Stomach (tissue), 19 donors: ENCODE measurements at regions of chr19 and their contacts with region 1.

Region 1: DNA sequence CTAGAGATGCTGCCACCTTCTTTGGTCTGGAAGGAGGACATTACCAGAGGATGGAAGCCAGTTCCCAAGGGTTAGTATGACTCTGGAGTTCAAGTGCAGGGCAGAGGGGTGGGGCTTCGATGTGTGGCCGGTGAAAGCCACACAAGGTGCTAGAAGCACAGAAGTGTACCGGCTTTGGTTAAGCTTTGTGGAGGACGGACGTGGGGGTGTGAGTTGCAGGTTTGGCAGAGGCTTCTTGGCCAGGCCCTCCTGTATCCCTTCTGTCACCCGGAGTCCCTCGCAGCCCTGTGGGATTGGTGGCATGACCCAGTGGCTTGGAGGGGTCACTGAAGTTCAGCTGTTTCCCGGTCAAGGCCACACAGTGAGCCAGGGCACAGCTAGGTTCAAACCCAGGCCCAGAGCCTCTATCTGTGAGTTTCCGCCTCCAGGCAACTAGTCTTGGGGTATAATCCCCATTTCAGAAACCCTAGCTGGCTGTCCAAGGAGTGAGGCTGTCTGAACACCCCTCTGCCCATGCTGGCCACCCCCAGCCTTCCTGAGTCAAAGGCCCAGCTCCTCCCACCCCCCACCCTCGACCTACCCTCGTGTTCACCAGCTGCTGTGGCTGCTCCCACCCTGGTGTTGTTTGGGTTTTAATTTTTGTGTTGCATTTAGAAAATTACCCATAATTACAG is 4.6 kb upstream of the SSBP4 start:
- DNase-seq: peak in 1 of 2 donors; percentile 76
- H3K4me3 ChIP-seq: peak overlapping the region in 3 of 4 donors; percentile 22 to 31 (median 23)
- H3K27ac ChIP-seq: peak overlapping the region; percentile 68 to 95 (median 90)
- H3K4me1 ChIP-seq: peaks cover 49 to 62% (median 53%) of the 10 kb centered on the region in 4 donors
- H3K27me3 ChIP-seq: peaks cover 0 to 38% (median 22%) of the 10 kb centered on the region in 3 donors
- CTCF ChIP-seq: no peak
- EP300 ChIP-seq: no peak
- POLR2A ChIP-seq: no peak

Region 2: GRCh38 chr19:18333662-18334389 is 80.8 kb before region 1 on chr19:
- intact Hi-C with region 1: no loop called
- DNase-seq: no peak
- H3K4me3 ChIP-seq: no peak overlapping the region
- H3K27ac ChIP-seq: no peak overlapping the region
- H3K4me1 ChIP-seq: peaks cover 6 to 8% (median 7%) of the 10 kb centered on the region in 4 donors
- H3K27me3 ChIP-seq: no peaks in the 10 kb centered on the region
- CTCF ChIP-seq: no peak
- EP300 ChIP-seq: no peak
- POLR2A ChIP-seq: no peak

Region 3: GRCh38 chr19:18349524-18350128 is 65.0 kb before region 1 on chr19:
- intact Hi-C with region 1: loop called (anchors 5 kb)
- DNase-seq: peak; percentile 67 to 74
- H3K4me3 ChIP-seq: no peak overlapping the region
- H3K27ac ChIP-seq: no peak overlapping the region
- H3K4me1 ChIP-seq: peaks cover 6 to 25% (median 15%) of the 10 kb centered on the region in 4 donors
- H3K27me3 ChIP-seq: no peaks in the 10 kb centered on the region
- CTCF ChIP-seq: peak in 5 of 7 experiments; percentile 58 to 85 (median 77)
- EP300 ChIP-seq: no peak
- POLR2A ChIP-seq: no peak

Region 4: DNA sequence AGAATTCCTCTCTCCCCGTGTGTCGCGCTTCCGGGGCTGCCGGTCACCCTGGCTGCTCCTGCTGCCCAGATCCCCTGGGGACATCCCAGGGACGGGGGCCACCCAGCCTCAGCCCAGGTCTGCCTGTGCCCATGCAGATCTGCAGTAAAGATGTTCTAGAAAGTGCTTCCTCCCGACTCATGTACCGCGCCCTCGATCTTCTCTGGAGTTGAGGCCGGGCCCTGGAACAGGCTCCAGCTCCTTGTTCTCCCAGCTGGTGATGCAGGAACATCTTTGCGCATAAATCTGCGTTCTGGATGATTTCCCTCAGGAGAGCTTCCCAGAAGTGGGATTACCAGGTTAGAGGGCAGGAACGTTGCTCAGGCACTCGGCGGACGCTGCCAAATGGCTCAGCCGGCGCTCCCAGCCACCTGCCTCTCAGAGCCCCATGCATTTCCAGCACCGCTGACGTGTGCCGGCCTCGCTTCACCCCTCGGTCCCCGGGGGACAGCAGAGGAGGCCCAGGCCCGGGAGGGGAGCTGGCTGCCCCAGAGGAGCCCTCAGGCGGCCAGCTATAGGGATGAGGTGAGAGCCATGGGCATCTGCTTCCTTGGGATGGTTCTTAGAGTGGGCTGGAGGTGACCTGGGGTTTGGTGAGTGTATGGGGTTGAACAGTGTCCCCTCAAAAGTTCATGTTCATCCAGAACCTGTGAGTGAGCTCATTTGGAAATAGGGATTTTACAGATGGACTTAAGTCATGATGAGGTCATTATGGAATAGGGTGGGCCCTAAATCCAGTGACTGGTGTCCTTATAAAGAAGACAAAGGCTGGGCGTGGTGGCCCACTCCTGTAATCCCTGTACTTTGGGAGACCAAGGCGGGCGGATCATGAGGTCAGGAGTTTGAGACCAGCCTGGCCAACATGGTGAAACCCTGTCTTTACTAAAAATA is 311.5 kb after region 1 on chr19:
- intact Hi-C with region 1: no loop called
- DNase-seq: peak in 1 of 2 donors; percentile 22
- H3K4me3 ChIP-seq: no peak overlapping the region
- H3K27ac ChIP-seq: peak overlapping the region in 4 of 5 donors; percentile 41 to 82 (median 52)
- H3K4me1 ChIP-seq: peaks cover 1 to 16% (median 9%) of the 10 kb centered on the region in 4 donors
- H3K27me3 ChIP-seq: no peaks in the 10 kb centered on the region
- CTCF ChIP-seq: no peak
- EP300 ChIP-seq: no peak
- POLR2A ChIP-seq: no peak